Posterior vena cava (tissue), 2 donors: ENCODE measurements at regions of chr7 and their contacts with region 1.

Region 1: GRCh38 chr7:41693150-41693997 is 9.5 kb downstream of the INHBA start:
- DNase-seq: no peak

Region 2: GRCh38 chr7:41955893-41956675 is 262.7 kb after region 1 on chr7:
- intact Hi-C with region 1: no loop called
- DNase-seq: peak; percentile 98

Region 3: GRCh38 chr7:43372676-43373355 is 1679.4 kb after region 1 on chr7:
- intact Hi-C with region 1: loop called in 1 of 2 experiments (anchors 5 kb)
- DNase-seq: no peak